Endothelial cell of umbilical vein (primary cell): ENCODE measurements at regions of chr12 and their contacts with region 1.

Region 1: DNA sequence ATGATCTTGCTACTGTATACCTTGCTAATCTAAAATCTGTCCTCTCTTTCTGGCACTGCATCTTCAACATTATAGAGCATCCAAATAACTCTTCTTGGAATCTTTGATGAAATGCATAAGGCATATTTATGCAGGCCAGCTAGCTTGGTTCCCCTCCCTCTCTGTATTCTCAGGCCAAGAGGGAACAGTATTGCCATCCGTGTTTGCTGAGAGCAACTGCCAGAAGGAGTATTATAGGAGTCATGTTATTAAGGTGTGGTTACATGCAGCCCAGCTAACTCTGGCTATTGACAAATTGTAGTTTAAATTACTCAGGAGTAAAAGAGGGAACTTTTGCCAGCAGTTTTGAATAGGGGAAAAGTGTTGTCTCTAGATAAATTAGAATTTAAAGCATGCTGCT is 309.3 kb upstream of the E2F7 start:
- DNase-seq: no peak
- H3K4me3 ChIP-seq: no peak overlapping the region
- H3K27ac ChIP-seq: no peak overlapping the region
- H3K4me1 ChIP-seq: no peaks in the 10 kb centered on the region
- H3K27me3 ChIP-seq: no peaks in the 10 kb centered on the region
- CTCF ChIP-seq: no peak
- POLR2A ChIP-seq: no peak

Region 2: GRCh38 chr12:77354766-77355362 is 19.8 kb before region 1 on chr12:
- CTCF ChIA-PET with region 1: no interaction called
- POLR2A ChIA-PET with region 1: no interaction called
- dilution Hi-C with region 1: no loop called
- intact Hi-C with region 1: loop called (anchors 2 kb)
- DNase-seq: peak; percentile 17
- H3K4me3 ChIP-seq: no peak overlapping the region
- H3K27ac ChIP-seq: no peak overlapping the region
- H3K4me1 ChIP-seq: no peaks in the 10 kb centered on the region
- H3K27me3 ChIP-seq: no peaks in the 10 kb centered on the region
- CTCF ChIP-seq: no peak
- POLR2A ChIP-seq: no peak

Region 3: DNA sequence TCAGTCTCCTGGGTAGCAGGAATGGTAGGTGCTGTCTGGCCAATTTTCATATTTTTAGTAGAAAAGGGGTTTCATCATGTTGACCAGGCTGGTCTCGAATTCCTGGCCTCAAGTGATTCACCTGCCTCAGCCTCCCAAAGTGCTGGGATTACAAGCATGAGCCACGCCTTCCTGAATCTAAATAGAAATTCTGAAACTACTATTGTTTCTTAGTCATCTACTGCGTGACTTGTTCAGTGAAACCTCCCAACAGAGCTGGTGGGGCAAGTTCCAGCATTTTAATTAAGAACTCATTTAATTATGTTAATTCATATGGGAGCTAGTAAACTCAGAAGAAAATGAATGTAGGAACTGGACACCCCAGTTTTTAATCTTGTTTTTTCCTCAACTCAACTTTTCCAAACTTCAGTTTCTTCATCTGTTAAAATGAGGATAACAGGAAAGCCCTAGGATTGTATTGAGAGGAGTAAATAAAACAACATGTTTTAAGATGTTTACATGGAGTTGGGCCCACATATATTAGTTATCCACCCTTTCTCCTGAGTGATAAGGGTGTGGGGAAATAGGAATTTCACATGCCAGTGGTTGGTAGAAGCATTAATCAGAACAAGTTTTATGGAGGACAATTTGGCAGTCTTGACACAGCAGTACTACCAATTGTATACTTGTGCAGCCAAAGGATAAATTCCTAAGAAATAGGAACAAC is 26.5 kb after region 1 on chr12:
- CTCF ChIA-PET with region 1: no interaction called
- POLR2A ChIA-PET with region 1: no interaction called
- dilution Hi-C with region 1: no loop called
- intact Hi-C with region 1: no loop called
- DNase-seq: no peak
- H3K4me3 ChIP-seq: no peak overlapping the region
- H3K27ac ChIP-seq: no peak overlapping the region
- H3K4me1 ChIP-seq: no peaks in the 10 kb centered on the region
- H3K27me3 ChIP-seq: no peaks in the 10 kb centered on the region
- CTCF ChIP-seq: no peak
- POLR2A ChIP-seq: no peak